ENCODE measurements at regions of chr9 and their contacts with region 1.

Region 1: DNA sequence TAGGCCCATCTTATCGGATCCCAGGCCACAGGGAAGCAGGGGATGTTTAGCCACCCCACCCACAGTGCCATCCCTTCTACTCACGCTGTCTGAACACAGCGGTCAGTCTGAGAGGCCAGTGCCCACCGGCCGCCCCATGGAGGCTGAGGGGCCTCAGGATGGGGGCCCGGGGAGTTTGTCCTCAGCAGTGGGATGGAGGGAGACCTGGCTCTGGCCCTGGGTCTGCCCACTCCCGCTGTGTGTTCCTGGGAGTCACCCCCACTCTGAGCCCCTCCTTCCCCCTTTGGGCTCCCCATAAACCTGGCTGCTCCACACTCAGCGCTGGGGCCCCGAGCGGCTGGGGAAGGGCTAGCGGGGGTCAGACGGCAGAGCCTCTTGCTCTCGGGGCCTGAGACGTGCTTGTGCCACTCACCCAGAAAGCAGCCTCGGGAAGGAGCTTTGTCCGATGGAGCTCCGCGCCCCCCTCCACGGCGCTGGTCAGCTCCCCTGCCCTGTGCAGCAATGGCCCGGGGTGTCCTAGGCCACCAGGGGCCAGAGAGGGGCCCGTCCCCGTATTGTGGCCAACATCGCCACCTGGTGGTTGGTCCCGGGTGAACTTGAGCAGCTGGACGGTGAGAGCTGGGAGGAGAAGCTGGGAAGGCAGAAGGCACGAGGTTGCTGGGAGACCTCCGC is 10.9 kb upstream of the LAMC3 start:
- DNase-seq: peak; percentile 96
- ATAC-seq: peak; percentile 90
- H3K4me3 Mint-ChIP-seq: no peak overlapping the region
- H3K27ac Mint-ChIP-seq: no peak overlapping the region
- H3K4me1 Mint-ChIP-seq: peaks cover 3% of the 10 kb centered on the region; the same call in 1 of the 2 replicates
- H3K27me3 Mint-ChIP-seq: peaks cover 14% of the 10 kb centered on the region
- CTCF ChIP-seq: peak; percentile 83

Region 2: GRCh38 chr9:130884980-130885696 is 112.9 kb before region 1 on chr9:
- CTCF ChIA-PET with region 1: interaction called, 12 read pairs
- POLR2A ChIA-PET with region 1: no interaction called
- DNase-seq: no peak
- ATAC-seq: no peak
- H3K4me3 Mint-ChIP-seq: no peak overlapping the region
- H3K27ac Mint-ChIP-seq: peak overlapping the region; percentile 59
- H3K4me1 Mint-ChIP-seq: peaks cover 10% of the 10 kb centered on the region
- H3K27me3 Mint-ChIP-seq: no peaks in the 10 kb centered on the region
- CTCF ChIP-seq: no peak

Region 3: DNA sequence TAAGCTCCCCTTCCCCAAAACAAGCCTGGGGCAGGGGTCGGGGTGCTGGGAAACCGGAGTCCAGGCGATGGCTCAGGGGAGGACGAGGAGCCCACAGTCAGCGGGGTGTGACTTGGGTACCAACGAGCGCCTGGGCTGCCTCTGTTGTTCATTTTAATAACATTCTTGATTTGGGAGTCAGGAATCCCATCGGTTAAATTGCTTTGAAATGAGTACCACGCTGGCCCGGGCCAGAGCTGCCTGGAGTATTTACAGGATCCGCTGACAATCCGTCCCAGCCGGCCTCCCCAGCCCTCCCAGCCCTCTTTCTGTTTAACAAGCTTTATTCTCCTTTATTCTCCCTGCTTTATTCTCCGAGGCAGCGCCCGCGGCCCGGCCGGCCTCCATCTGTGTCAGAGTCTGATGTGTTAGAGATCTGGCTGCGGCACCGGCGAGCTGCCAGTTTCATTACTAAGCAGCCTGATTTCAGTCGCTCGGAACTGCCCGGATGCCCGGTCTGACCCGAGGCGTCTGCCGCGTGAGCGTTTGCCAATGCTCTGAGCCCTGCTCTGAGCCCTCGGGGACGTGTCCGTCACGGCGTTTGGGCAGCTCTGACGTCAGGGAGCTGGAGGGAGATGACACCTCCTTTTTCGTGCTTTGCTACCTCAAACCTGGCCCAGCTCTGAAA is 85.0 kb before region 1 on chr9:
- CTCF ChIA-PET with region 1: interaction called, 20 read pairs
- POLR2A ChIA-PET with region 1: no interaction called
- DNase-seq: no peak
- ATAC-seq: no peak
- H3K4me3 Mint-ChIP-seq: no peak overlapping the region
- H3K27ac Mint-ChIP-seq: peak overlapping the region; percentile 85
- H3K4me1 Mint-ChIP-seq: peaks cover 9% of the 10 kb centered on the region
- H3K27me3 Mint-ChIP-seq: no peaks in the 10 kb centered on the region
- CTCF ChIP-seq: no peak

Region 4: GRCh38 chr9:130956636-130957450 is 41.2 kb before region 1 on chr9:
- CTCF ChIA-PET with region 1: interaction called, 11 read pairs
- POLR2A ChIA-PET with region 1: no interaction called
- DNase-seq: no peak
- ATAC-seq: no peak
- H3K4me3 Mint-ChIP-seq: no peak overlapping the region
- H3K27ac Mint-ChIP-seq: no peak overlapping the region
- H3K4me1 Mint-ChIP-seq: no peaks in the 10 kb centered on the region
- H3K27me3 Mint-ChIP-seq: no peaks in the 10 kb centered on the region
- CTCF ChIP-seq: no peak

Region 5: DNA sequence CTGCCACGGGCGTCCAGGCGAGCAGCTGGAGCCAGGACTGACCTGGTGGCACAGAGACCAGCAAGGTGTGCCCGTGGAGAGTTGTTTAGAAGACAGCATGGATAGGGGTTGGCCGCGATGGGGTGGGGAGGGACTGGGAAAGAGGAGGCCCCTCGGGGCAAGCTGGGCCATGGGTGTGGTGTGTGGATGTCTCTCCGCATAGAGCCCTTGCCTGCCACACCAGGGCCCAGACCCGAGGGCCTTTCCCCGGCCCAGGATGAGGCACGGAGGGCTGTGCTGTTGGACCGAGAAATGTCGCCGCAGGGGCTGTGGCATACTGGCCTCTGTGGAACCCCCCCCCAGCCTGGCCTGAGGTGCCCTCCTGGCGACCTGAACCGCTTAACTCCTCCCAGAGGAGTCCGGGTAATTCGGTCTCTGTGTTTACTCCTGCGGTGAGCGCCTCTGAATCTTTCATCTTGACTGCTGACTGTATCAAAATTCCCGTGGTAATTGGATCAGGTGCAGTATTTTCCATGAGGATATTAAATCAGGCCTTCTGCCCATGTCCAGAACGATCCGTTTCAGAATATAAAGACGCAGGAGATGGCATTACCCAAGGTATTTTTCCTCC is 11.6 kb before region 1 on chr9:
- CTCF ChIA-PET with region 1: interaction called, 20 read pairs
- POLR2A ChIA-PET with region 1: no interaction called
- DNase-seq: no peak
- ATAC-seq: no peak
- H3K4me3 Mint-ChIP-seq: no peak overlapping the region
- H3K27ac Mint-ChIP-seq: no peak overlapping the region; the same call in 1 of the 2 replicates
- H3K4me1 Mint-ChIP-seq: peaks cover 19% of the 10 kb centered on the region
- H3K27me3 Mint-ChIP-seq: no peaks in the 10 kb centered on the region
- CTCF ChIP-seq: no peak

Region 6: DNA sequence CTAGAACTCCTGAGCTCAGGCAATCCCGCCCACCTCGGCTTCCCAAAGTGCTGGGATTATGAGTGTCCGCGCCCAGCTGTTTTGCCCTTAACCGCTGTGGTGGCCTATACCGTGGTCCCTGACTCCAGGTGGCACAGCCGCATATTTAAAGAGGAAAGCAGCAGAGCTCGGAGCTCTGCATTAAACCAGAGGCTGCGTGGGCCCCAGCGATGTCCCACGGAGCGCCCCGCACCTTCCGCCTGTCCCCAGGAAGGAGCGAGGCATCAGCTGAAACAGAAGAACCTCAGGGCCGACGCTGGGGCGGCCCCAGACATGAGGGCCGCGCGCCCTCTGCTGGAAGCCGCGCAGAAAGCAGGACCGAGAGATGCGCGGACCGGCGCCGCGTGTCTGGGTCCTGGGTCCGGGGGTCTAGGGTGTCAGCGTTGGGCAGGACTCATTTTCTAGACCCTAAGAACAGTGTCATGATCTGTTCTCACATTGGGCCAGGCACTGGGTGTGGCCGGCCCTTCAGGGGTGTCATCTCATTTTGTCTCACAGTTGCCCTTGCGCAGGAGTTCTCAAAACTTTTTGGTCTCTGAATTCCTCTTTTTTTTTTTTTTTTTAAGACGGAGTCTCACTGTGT is 48.6 kb after region 1 on chr9:
- CTCF ChIA-PET with region 1: interaction called, 28 read pairs
- POLR2A ChIA-PET with region 1: no interaction called
- DNase-seq: peak; percentile 83
- ATAC-seq: peak; percentile 95
- H3K4me3 Mint-ChIP-seq: no peak overlapping the region
- H3K27ac Mint-ChIP-seq: no peak overlapping the region
- H3K4me1 Mint-ChIP-seq: no peaks in the 10 kb centered on the region
- H3K27me3 Mint-ChIP-seq: no peaks in the 10 kb centered on the region
- CTCF ChIP-seq: peak; percentile 85

Region 7: GRCh38 chr9:131116281-131117115 is 118.4 kb after region 1 on chr9:
- CTCF ChIA-PET with region 1: no interaction called
- POLR2A ChIA-PET with region 1: no interaction called
- DNase-seq: no peak
- ATAC-seq: no peak
- H3K4me3 Mint-ChIP-seq: no peak overlapping the region
- H3K27ac Mint-ChIP-seq: no peak overlapping the region
- H3K4me1 Mint-ChIP-seq: no peaks in the 10 kb centered on the region
- H3K27me3 Mint-ChIP-seq: no peaks in the 10 kb centered on the region
- CTCF ChIP-seq: no peak

Measured in WTC11 (cell line).